Naive thymus-derived CD4-positive, alpha-beta T cell (primary cell): ENCODE measurements at regions of chr5 and their contacts with region 1.

Region 1: GRCh38 chr5:65801352-65801783 is 79.4 kb downstream of the NLN start:
- DNase-seq: no peak
- ATAC-seq: no peak
- H3K4me3 ChIP-seq: no peak overlapping the region
- H3K4me3 Mint-ChIP-seq: no peak overlapping the region
- H3K27ac ChIP-seq: no peak overlapping the region
- H3K27ac Mint-ChIP-seq: peak overlapping the region in 1 of 9 donors; percentile 53
- H3K4me1 ChIP-seq: peaks cover 7 to 11% of the 10 kb centered on the region in 2 donors
- H3K4me1 Mint-ChIP-seq: peaks cover 17 to 36% (median 27%) of the 10 kb centered on the region in 7 donors
- H3K27me3 ChIP-seq: no peaks in the 10 kb centered on the region
- H3K27me3 Mint-ChIP-seq: no peaks in the 10 kb centered on the region

Region 2: DNA sequence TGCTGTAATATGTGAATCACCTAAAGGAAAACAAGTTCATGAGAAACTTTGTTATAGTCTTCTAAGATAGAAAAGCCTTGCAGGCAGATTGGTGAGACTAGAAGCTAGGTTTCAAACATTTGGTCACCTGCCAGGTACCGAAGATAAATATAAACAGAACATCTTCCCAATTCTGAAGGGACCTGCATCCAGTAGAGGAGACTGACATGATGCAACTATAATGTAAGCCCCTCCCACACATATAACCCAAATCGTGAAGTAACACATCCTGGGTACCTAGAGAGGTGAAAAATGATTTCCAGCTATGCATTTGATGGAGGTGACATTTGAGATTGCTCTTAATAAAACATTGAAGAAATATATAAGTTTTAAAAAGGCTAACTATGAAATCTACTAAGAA is 146.7 kb before region 1 on chr5:
- CTCF ChIA-PET with region 1: no interaction called
- POLR2A ChIA-PET with region 1: no interaction called
- intact Hi-C with region 1: no loop called
- DNase-seq: no peak
- ATAC-seq: no peak
- H3K4me3 ChIP-seq: no peak overlapping the region
- H3K4me3 Mint-ChIP-seq: no peak overlapping the region
- H3K27ac ChIP-seq: no peak overlapping the region
- H3K27ac Mint-ChIP-seq: no peak overlapping the region
- H3K4me1 ChIP-seq: no peaks in the 10 kb centered on the region
- H3K4me1 Mint-ChIP-seq: no peaks in the 10 kb centered on the region
- H3K27me3 ChIP-seq: no peaks in the 10 kb centered on the region
- H3K27me3 Mint-ChIP-seq: no peaks in the 10 kb centered on the region

Region 3: GRCh38 chr5:65779643-65780042 is 21.7 kb before region 1 on chr5:
- CTCF ChIA-PET with region 1: interaction called, 3 read pairs
- POLR2A ChIA-PET with region 1: no interaction called
- intact Hi-C with region 1: loop called in 1 of 2 experiments (anchors 2 kb)
- DNase-seq: peak in 4 of 9 donors; percentile 10 to 28 (median 16)
- ATAC-seq: peak; percentile 29
- H3K4me3 ChIP-seq: no peak overlapping the region
- H3K4me3 Mint-ChIP-seq: peak overlapping the region; percentile 40 to 71 (median 56)
- H3K27ac ChIP-seq: no peak overlapping the region
- H3K27ac Mint-ChIP-seq: peak overlapping the region; percentile 24 to 91 (median 78)
- H3K4me1 ChIP-seq: peaks cover 0 to 9% of the 10 kb centered on the region in 2 donors
- H3K4me1 Mint-ChIP-seq: peaks cover 17 to 29% (median 24%) of the 10 kb centered on the region in 7 donors
- H3K27me3 ChIP-seq: no peaks in the 10 kb centered on the region
- H3K27me3 Mint-ChIP-seq: no peaks in the 10 kb centered on the region

Region 4: DNA sequence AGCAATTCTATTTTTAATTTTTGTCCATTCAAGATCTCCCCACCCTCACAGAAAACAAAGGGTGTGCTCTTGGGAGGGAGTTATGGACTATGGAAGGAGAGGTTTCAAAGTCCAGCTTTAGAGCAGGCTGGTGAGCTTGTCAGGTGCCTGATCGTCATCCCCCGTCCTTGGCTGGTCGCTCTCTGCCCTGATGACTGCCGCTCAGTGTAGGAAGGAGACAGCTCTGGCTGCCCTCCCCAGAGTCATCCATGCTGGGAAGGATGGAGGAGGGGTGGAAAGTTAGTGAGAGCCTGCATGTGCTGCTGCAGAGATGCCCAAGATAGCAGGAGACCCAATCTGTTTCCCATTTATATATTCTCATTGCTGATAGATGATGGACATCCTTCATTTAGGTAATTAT is 17.2 kb after region 1 on chr5:
- CTCF ChIA-PET with region 1: no interaction called
- POLR2A ChIA-PET with region 1: no interaction called
- intact Hi-C with region 1: loop called in 1 of 2 experiments (anchors 2 kb)
- DNase-seq: no peak
- ATAC-seq: no peak
- H3K4me3 ChIP-seq: no peak overlapping the region
- H3K4me3 Mint-ChIP-seq: no peak overlapping the region
- H3K27ac ChIP-seq: no peak overlapping the region
- H3K27ac Mint-ChIP-seq: no peak overlapping the region
- H3K4me1 ChIP-seq: peaks cover 0 to 6% of the 10 kb centered on the region in 2 donors
- H3K4me1 Mint-ChIP-seq: peaks cover 0 to 17% (median 10%) of the 10 kb centered on the region in 7 donors
- H3K27me3 ChIP-seq: no peaks in the 10 kb centered on the region
- H3K27me3 Mint-ChIP-seq: no peaks in the 10 kb centered on the region

Region 5: GRCh38 chr5:65876496-65876895 is 75.1 kb after region 1 on chr5:
- CTCF ChIA-PET with region 1: no interaction called
- POLR2A ChIA-PET with region 1: no interaction called
- intact Hi-C with region 1: no loop called
- DNase-seq: no peak
- ATAC-seq: no peak
- H3K4me3 ChIP-seq: no peak overlapping the region
- H3K4me3 Mint-ChIP-seq: no peak overlapping the region
- H3K27ac ChIP-seq: no peak overlapping the region
- H3K27ac Mint-ChIP-seq: no peak overlapping the region
- H3K4me1 ChIP-seq: no peaks in the 10 kb centered on the region
- H3K4me1 Mint-ChIP-seq: peaks cover 0 to 7% (median 0%) of the 10 kb centered on the region in 7 donors
- H3K27me3 ChIP-seq: no peaks in the 10 kb centered on the region
- H3K27me3 Mint-ChIP-seq: no peaks in the 10 kb centered on the region

Region 6: DNA sequence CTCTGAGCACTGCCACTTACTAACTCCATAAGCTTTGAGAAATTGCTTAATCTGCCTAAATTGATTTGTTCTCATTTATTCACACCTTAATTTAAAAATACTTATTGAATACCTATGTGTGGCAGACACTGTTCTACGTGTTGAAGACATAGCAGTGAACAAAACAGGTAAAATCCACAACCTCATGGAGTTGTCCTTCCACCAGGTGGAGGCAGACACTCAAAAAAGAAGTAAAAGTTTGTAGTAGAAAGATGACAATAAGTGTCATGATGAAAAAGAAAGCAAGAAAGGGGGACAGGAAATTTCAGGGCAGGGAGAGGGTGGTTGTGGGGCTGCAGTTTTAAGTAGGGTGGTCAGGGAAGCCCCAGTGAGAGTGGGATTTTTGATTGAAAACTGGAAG is 437.7 kb after region 1 on chr5:
- CTCF ChIA-PET with region 1: no interaction called
- POLR2A ChIA-PET with region 1: no interaction called
- intact Hi-C with region 1: no loop called
- DNase-seq: no peak
- ATAC-seq: no peak
- H3K4me3 ChIP-seq: no peak overlapping the region
- H3K4me3 Mint-ChIP-seq: no peak overlapping the region
- H3K27ac ChIP-seq: no peak overlapping the region
- H3K27ac Mint-ChIP-seq: no peak overlapping the region
- H3K4me1 ChIP-seq: no peaks in the 10 kb centered on the region
- H3K4me1 Mint-ChIP-seq: no peaks in the 10 kb centered on the region
- H3K27me3 ChIP-seq: no peaks in the 10 kb centered on the region
- H3K27me3 Mint-ChIP-seq: peaks cover 2 to 7% (median 5%) of the 10 kb centered on the region in 5 donors